Heart right ventricle (tissue), 16 donors: ENCODE measurements at regions of chr4 and their contacts with region 1.

Region 1: GRCh38 chr4:74932816-74933561 is at the start of gene PARM1:
- DNase-seq: peak; percentile 90 to 92
- ATAC-seq: peak; percentile 91 to 99 (median 95)
- H3K4me3 ChIP-seq: peak within 1 kb of the TSS; percentile 54 to 77 (median 71)
- H3K27ac ChIP-seq: peak within 1 kb of the TSS; percentile 8 to 84 (median 69)
- H3K4me1 ChIP-seq: peaks cover 0 to 26% (median 10%) of the 10 kb centered on the region in 9 donors
- H3K27me3 ChIP-seq: peaks cover 0 to 50% (median 0%) of the 10 kb centered on the region in 7 donors
- CTCF ChIP-seq: peak; percentile 54 to 84 (median 73)
- total RNA-seq, gene PARM1: 34.2 to 119 (median 80.9) TPM

Region 2: DNA sequence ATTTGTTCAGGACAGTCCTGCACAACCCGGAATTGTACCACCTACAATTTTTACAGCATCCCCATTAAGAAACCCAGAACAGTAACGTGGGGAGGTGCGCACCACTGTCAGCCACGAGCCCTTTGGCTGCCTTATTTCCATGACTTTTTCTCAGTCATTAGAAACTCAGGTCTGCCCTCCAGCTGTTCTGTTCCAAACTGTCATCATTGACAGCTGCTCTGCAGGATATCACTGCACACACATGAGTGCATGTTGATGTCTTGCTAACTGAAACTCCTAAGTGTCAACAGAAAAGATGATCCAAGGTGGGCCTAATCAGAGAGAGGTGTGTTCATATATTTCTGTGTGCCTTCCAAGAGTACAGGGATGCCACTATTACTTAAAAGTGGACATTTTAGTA is 123.3 kb after region 1 on chr4:
- intact Hi-C with region 1: loop called in 6 of 10 experiments (anchors 2 to 10 kb)
- DNase-seq: no peak
- ATAC-seq: peak in 5 of 8 donors; percentile 31 to 73 (median 59)
- H3K4me3 ChIP-seq: no peak overlapping the region
- H3K27ac ChIP-seq: no peak overlapping the region
- H3K4me1 ChIP-seq: peaks cover 0 to 7% (median 0%) of the 10 kb centered on the region in 9 donors
- H3K27me3 ChIP-seq: no peaks in the 10 kb centered on the region
- CTCF ChIP-seq: peak in 6 of 9 donors; percentile 9 to 37 (median 24)

Region 3: GRCh38 chr4:75118739-75119138 is 185.8 kb after region 1 on chr4:
- intact Hi-C with region 1: loop called in 7 of 10 experiments (anchors 1 to 5 kb)
- DNase-seq: no peak
- ATAC-seq: no peak
- H3K4me3 ChIP-seq: no peak overlapping the region
- H3K27ac ChIP-seq: no peak overlapping the region
- H3K4me1 ChIP-seq: no peaks in the 10 kb centered on the region
- H3K27me3 ChIP-seq: no peaks in the 10 kb centered on the region
- CTCF ChIP-seq: no peak

Region 4: DNA sequence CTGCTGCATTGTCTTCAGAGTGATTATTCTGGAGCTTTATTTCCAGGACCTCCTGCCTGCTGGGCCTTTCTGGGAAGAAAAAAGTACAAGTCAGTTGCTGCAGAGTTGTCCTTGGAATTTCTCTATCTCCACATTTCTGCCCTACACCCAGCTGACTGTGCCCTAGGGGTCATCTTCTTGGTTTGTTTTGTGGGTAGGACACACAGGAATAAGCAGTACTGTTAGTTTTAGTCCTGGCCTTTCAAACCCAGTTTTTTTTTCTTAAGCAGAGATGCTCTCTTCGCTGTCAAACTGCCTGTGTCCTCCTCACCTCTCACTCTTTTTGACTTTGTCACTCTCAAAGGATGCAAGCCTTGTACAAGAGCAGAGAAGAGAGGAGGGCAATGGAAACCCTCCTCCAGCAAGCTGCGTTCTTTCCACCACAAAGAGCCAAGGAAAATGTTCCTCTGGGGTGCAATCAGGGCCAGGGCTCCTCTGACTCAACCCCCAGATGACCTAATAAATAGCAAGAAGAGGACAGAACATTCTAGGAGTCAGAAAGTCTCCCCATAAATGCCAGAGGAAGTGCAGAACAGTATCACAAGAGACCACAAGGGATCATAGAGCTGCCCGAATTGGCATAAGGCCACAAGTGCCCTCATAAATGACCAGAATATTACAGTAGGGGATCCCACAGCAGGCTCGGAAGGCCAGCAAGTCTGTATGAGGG is 395.0 kb after region 1 on chr4:
- intact Hi-C with region 1: loop called in 1 of 10 experiments (anchors 10 kb)
- DNase-seq: no peak
- ATAC-seq: peak in 7 of 8 donors; percentile 31 to 90 (median 61)
- H3K4me3 ChIP-seq: no peak overlapping the region
- H3K27ac ChIP-seq: peak overlapping the region in 1 of 10 donors; percentile 44
- H3K4me1 ChIP-seq: peaks cover 0 to 25% (median 0%) of the 10 kb centered on the region in 9 donors
- H3K27me3 ChIP-seq: no peaks in the 10 kb centered on the region
- CTCF ChIP-seq: no peak

Region 5: DNA sequence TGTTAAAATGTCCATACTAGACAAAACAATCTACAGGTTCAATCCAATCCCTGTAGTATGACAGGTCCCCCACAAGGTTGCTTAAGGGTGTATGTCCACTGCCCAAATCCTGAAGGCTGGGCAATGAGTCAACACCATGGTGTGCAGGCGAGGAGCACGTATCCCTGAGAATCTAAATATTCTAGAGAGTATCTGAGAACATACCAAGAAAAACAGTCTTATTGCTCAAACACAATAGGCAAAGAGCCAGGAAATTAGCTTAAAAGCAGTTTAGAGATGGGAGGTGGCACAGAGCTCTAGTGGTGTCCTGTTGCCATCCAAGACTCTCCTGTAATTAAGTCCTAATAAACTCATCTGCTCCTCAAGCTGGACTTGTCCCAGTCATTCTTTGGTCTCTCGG is 544.2 kb after region 1 on chr4:
- intact Hi-C with region 1: loop called in 3 of 10 experiments (anchors 5 to 10 kb)
- DNase-seq: no peak
- ATAC-seq: no peak
- H3K4me3 ChIP-seq: no peak overlapping the region
- H3K27ac ChIP-seq: no peak overlapping the region
- H3K4me1 ChIP-seq: no peaks in the 10 kb centered on the region
- H3K27me3 ChIP-seq: no peaks in the 10 kb centered on the region
- CTCF ChIP-seq: no peak

Region 6: GRCh38 chr4:75490155-75490554 is 557.2 kb after region 1 on chr4:
- intact Hi-C with region 1: loop called in 3 of 10 experiments (anchors 5 to 10 kb)
- DNase-seq: no peak
- ATAC-seq: no peak
- H3K4me3 ChIP-seq: no peak overlapping the region
- H3K27ac ChIP-seq: no peak overlapping the region
- H3K4me1 ChIP-seq: peaks cover 0 to 14% (median 4%) of the 10 kb centered on the region in 9 donors
- H3K27me3 ChIP-seq: no peaks in the 10 kb centered on the region
- CTCF ChIP-seq: peak in 6 of 9 donors; percentile 20 to 51 (median 24)